Right ventricle myocardium superior (tissue), 1 donor: ENCODE measurements at regions of chr12 and their contacts with region 1.

Region 1: DNA sequence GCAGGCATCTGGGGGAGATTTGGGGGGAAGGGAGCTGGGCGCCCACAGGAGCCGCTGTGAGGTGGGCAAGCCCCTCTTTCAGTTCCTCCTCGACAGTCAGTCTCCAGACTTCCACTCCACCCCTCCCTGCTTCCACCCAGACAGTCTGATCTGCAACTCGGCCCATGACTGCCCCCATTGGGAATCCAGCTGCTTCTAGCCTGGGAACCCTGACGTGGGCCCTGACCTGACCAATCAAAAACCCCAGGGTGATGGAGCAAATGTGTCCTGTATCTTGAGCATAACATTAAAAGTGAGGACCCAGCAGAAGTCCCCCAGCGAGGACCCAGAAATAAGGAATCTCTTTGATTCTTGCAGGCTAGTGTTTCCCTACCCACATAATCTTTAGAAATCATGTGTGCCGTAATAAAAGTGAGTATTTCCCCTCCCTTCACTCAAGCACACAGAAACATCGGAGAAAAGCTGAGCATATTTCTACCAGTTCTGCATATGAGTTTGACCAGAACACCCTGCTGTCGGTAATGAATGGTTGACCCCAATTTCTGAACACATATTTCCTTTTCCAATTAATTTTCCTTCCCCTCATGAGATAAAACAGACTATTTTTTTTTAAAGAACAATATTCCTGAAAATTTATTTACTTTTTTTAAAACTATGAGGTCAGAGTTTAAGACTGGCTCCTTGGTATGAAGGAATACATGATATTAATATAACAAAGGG is 6.4 kb downstream of the SSH1 start:
- DNase-seq: peak; percentile 65
- ATAC-seq: peak; percentile 44

Region 2: GRCh38 chr12:108816652-108817335 is 34.2 kb before region 1 on chr12:
- intact Hi-C with region 1: loop called (anchors 5 kb)
- DNase-seq: peak; percentile 81
- ATAC-seq: peak; percentile 65

Region 3: GRCh38 chr12:109047081-109047805 is 196.2 kb after region 1 on chr12:
- intact Hi-C with region 1: no loop called
- DNase-seq: no peak
- ATAC-seq: no peak